Transverse colon (tissue), 4 donors: ENCODE measurements at regions of chr1 and their contacts with region 1.

Region 1: GRCh38 chr1:229531326-229531725 is 23.2 kb upstream of the NUP133 start:
- DNase-seq: no peak
- H3K4me3 ChIP-seq: no peak overlapping the region
- H3K27ac ChIP-seq: no peak overlapping the region
- H3K4me1 ChIP-seq: no peaks in the 10 kb centered on the region
- H3K27me3 ChIP-seq: no peaks in the 10 kb centered on the region
- CTCF ChIP-seq: no peak
- EP300 ChIP-seq: no peak
- POLR2A ChIP-seq: no peak

Region 2: DNA sequence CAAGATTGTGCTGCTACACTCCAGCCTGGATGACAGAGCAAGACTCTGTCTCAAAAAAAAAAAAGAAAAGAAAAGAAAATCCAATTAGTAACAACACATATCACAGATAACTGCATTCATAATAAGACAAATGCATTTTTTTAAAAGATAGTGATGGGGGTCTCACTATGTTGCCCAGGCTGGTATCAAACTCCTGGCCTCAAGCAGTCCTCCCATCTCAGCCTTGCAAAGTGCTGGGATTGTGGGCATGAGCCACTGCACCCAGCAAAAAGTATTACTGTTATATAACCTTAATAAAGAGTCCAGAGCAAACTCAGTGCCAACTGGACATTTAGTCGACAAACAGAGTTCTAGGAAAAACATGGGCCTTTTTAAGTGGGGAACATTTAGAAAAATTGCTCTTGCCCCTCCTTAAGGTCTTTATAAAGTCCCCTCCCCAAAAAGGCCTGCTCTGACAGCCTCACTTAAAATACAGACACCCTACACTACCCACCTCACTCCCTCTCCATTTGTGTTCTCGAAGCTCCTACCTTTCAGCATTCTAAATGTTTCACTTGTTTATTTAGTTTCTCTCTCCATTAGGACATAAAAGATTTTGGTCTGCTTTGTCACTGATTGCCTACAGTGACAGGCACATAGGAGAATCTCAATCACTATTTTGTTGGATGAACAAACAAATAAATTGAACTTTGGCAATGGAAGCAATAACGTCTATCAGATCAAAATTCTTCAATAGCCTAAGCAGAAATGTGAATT is 19.7 kb after region 1 on chr1:
- in situ Hi-C with region 1: no loop called
- intact Hi-C with region 1: loop called (anchors 1 kb)
- DNase-seq: no peak
- H3K4me3 ChIP-seq: no peak overlapping the region
- H3K27ac ChIP-seq: no peak overlapping the region
- H3K4me1 ChIP-seq: peaks cover 0 to 6% (median under 1%) of the 10 kb centered on the region in 4 donors
- H3K27me3 ChIP-seq: no peaks in the 10 kb centered on the region
- CTCF ChIP-seq: no peak
- EP300 ChIP-seq: no peak
- POLR2A ChIP-seq: no peak